Pancreas (tissue), 10 donors: ENCODE measurements at regions of chr5 and their contacts with region 1.

Region 1: DNA sequence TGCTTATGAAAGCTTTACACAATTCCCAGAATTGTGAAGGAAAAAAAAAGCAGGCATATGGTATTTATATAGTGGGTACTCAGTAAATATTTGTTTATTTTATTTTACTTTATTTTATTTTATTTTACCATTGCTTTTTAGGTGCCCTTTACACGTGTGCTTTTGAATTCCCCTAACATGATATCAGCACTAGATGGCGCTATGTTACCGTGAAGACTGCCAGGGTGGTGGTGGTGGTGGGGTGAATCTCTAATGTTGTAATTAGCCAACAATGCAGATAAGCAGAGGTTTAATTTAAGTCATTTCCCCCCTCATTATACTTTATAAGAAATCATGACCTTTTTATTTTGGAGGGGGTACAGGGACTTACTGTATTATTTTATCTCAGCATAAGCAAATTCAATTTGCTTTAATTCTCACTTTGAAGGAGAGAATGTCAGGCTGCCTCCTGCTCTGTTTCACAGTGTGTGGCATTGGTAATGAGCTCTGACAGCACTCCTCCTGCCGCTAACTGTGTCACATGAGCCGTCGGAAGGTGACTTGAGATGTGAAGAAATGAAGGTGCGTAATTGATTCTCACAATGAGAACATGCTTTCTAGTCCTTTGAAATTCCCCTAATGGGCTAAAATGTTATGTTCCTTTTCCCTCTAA is 165.6 kb downstream of the YTHDC2 start:
- DNase-seq: no peak
- ATAC-seq: peak in 3 of 4 donors; percentile 69 to 83 (median 72)
- H3K4me3 ChIP-seq: no peak overlapping the region
- H3K27ac ChIP-seq: no peak overlapping the region
- H3K4me1 ChIP-seq: no peaks in the 10 kb centered on the region
- H3K27me3 ChIP-seq: no peaks in the 10 kb centered on the region
- CTCF ChIP-seq: peak; percentile 40 to 49 (median 44)

Region 2: GRCh38 chr5:113474100-113474728 is 204.8 kb before region 1 on chr5:
- intact Hi-C with region 1: no loop called
- DNase-seq: no peak
- ATAC-seq: no peak
- H3K4me3 ChIP-seq: no peak overlapping the region
- H3K27ac ChIP-seq: no peak overlapping the region
- H3K4me1 ChIP-seq: no peaks in the 10 kb centered on the region
- H3K27me3 ChIP-seq: no peaks in the 10 kb centered on the region
- CTCF ChIP-seq: no peak

Region 3: DNA sequence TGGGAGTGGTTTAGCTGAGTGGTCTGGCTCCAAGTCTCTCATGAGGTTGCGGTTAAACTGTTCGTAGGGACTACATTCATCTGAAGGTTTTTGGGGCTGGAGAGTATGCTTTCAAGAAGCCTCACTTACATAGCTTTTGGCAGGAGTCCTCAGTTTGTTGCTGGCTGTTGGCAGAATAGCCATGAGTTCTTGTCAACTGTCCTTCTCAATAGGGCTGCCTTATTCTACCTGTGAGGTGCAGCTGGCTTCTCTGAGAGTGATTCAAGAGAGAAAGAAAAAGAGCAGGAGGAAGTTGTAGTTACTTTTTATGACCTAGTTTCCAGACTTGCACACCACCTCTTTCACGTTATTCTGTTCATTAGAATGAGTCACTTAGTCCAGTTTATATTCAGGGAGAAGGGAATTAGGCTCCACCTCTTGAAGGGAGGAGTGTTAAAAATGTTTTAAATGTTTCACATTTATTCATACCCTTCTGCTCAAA is 132.3 kb before region 1 on chr5:
- intact Hi-C with region 1: no loop called
- DNase-seq: no peak
- ATAC-seq: peak in 2 of 4 donors; percentile 23 to 56
- H3K4me3 ChIP-seq: no peak overlapping the region
- H3K27ac ChIP-seq: no peak overlapping the region
- H3K4me1 ChIP-seq: no peaks in the 10 kb centered on the region
- H3K27me3 ChIP-seq: no peaks in the 10 kb centered on the region
- CTCF ChIP-seq: no peak

Region 4: DNA sequence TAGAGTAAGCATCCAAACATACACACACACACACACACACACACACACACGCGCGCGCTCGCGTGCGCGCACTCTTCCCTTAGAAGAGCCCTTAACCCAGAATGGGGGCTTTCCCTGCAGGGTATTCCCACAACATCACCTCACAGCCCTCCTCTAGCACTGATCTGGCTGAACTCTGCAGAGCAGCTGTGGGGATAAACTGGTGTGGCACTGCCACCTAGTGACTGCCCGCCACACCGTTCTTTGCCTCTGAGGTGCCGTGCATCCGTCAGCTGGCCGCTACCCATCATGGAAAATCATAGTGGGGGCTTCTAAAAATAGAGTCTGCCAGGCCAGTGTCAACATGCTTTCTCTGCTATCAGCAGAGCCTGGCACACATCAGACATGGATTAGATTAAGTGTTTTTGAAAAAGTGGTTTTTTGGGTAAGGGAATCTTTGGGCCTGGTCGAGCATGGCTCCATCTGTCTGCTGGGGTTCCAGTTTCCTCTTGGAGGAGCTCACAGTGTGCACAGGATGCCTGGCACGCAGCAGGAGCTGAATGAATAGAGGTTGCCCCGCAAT is 770.9 kb after region 1 on chr5:
- intact Hi-C with region 1: loop called in 1 of 3 experiments (anchors 10 kb)
- DNase-seq: peak; percentile 35 to 74 (median 64)
- ATAC-seq: peak; percentile 99 to 100 (median 100)
- H3K4me3 ChIP-seq: no peak overlapping the region
- H3K27ac ChIP-seq: no peak overlapping the region
- H3K4me1 ChIP-seq: peaks cover 0 to 4% (median 0%) of the 10 kb centered on the region in 3 donors
- H3K27me3 ChIP-seq: no peaks in the 10 kb centered on the region
- CTCF ChIP-seq: peak; percentile 49 to 69 (median 59)

Region 5: DNA sequence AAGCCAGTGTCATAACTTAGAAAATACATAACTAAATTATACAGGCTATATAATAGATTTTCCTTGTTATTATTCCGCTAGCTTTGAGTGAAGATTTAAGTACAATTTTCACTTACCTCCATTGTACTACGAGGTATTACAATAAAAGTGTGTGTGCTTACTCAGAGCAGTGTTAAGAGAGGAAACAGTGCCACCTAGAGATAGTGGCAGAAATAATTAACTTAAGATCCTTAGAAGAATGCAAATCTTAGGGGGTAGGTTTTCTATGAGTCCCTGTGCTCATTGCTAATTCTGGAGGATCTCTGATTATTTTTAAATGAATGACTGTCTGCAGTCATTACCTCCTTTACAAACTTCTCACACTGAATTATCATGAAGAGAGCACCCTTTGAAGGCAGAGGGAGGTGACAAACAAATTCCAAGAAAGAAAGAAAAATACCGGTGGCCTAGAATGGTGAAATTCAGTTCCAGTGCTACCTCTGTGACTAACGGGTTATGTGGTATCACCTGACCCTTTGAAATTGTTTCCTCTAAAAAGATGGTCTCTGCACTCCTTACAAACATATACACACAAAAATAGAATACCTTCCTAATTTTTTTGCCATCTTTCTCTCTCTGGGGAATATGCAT is 1110.8 kb after region 1 on chr5:
- intact Hi-C with region 1: loop called in 1 of 3 experiments (anchors 10 kb)
- DNase-seq: no peak
- ATAC-seq: peak in 2 of 4 donors; percentile 72 to 77
- H3K4me3 ChIP-seq: no peak overlapping the region
- H3K27ac ChIP-seq: no peak overlapping the region
- H3K4me1 ChIP-seq: no peaks in the 10 kb centered on the region
- H3K27me3 ChIP-seq: no peaks in the 10 kb centered on the region
- CTCF ChIP-seq: peak in 3 of 4 donors; percentile 15 to 38 (median 31)